Activated B cell treated with CpG ODN at 0.5 μM for 24 hours (primary cell): ENCODE measurements at regions of chr17 and their contacts with region 1.

Region 1: DNA sequence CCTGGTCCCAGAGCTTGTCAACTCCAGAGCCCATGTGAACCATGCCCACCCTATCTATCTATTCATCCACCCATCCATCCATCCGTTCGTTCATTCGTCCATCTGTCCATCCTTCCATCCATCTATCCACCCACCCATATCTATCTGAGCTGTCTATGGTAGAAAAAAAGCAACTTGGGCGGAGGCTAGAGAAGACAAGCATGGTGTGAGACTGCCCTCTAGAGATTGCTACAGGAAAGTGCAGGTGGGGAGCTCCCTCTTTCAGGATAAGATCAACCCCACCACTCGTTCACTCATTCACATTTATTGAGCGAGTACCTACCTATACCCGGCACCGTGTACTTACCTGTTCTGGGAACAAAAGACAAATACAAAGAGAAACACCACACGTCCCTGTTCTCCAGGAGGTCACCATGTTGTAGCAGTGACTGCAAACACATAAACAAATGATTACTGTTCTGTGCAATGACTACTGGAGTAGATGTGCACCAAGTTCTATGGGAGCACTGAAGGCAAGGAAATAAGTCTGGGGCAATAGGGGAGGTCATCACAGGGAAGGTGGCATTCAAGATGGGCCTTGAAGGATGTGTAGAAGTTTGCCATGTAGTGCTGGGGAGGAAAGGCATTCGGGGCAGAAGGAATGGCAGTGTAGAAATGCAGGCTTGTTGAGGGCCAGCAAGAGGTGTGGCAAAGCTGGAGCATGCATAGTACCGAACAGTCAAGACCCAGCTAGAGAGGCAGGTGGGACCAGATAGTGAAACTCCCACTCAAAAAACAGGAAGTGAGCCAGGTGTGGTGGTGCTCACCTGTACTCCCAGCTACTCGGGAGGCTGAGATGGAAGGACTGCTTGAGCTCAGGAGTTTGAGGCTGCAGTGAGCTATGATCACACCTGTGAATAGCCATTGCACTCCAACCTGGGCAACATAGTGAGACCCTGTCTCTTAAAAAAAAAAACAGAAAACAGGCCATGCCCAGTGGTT is 13.4 kb upstream of the ATP5MC1 start:
- DNase-seq: no peak
- ATAC-seq: peak; percentile 96
- H3K4me3 Mint-ChIP-seq: no peak overlapping the region
- H3K27ac Mint-ChIP-seq: no peak overlapping the region
- H3K4me1 Mint-ChIP-seq: peaks cover 2% of the 10 kb centered on the region
- H3K27me3 Mint-ChIP-seq: no peaks in the 10 kb centered on the region
- CTCF ChIP-seq: peak; percentile 82

Region 2: DNA sequence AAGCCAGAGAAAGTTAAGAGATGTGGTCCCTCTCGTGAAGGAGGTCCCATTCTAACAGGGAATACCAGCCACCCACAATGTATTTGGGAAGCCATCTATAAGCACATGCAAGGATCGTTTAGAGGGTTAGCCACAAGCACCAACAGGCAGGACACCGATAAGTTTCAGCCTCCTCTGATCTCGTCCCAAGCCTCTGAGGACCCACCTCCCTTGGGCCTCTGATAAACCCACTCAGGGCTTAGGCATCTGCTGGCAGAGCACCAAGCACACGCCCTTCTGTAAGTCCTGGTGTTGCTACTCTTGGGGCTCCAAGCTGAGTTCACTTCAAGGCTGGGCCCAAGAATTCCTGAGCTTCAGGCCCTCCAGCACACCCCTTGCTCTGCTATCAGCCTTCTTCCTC is 943.2 kb before region 1 on chr17:
- CTCF ChIA-PET with region 1: no interaction called
- POLR2A ChIA-PET with region 1: no interaction called
- intact Hi-C with region 1: no loop called
- DNase-seq: no peak
- ATAC-seq: no peak
- H3K4me3 Mint-ChIP-seq: no peak overlapping the region
- H3K27ac Mint-ChIP-seq: no peak overlapping the region
- H3K4me1 Mint-ChIP-seq: peaks cover 14% of the 10 kb centered on the region
- H3K27me3 Mint-ChIP-seq: no peaks in the 10 kb centered on the region
- CTCF ChIP-seq: no peak

Region 3: DNA sequence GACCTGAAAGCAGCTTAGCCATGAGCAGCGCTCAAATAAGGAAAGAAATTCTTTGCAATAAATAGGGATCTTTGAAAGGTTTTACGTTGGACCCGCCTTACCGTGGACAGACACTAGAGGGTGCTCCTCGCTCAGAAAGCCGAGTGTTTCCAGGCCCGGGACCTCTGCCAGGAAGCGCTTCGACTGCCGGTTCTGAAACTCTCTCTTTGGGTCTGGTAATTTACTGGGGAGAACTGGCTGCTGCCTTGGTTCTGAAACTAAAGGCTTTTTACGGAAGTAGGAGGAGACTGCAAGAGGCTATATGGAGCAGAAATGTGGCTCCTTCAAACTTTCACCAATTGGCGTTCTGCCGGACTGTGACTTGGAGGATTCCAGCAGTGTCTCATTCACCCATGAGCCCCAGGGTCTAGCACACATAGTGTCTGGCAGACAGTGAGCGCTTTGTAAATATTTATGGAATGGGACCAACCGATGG is 207.5 kb before region 1 on chr17:
- CTCF ChIA-PET with region 1: interaction called, 101 read pairs
- POLR2A ChIA-PET with region 1: no interaction called
- intact Hi-C with region 1: loop called (anchors 1 kb)
- DNase-seq: peak; percentile 48
- ATAC-seq: peak; percentile 71
- H3K4me3 Mint-ChIP-seq: peak overlapping the region; percentile 35
- H3K27ac Mint-ChIP-seq: no peak overlapping the region
- H3K4me1 Mint-ChIP-seq: peaks cover 5% of the 10 kb centered on the region
- H3K27me3 Mint-ChIP-seq: peaks cover 39% of the 10 kb centered on the region
- CTCF ChIP-seq: peak; percentile 34

Region 4: GRCh38 chr17:48724251-48725003 is 154.8 kb before region 1 on chr17:
- CTCF ChIA-PET with region 1: interaction called, 16 read pairs
- POLR2A ChIA-PET with region 1: no interaction called
- intact Hi-C with region 1: loop called (anchors 1 kb)
- DNase-seq: peak; percentile 57
- ATAC-seq: peak; percentile 75
- H3K4me3 Mint-ChIP-seq: peak overlapping the region; percentile 67
- H3K27ac Mint-ChIP-seq: peak overlapping the region; percentile 63
- H3K4me1 Mint-ChIP-seq: peaks cover 37% of the 10 kb centered on the region
- H3K27me3 Mint-ChIP-seq: peaks cover 80% of the 10 kb centered on the region
- CTCF ChIP-seq: no peak

Region 5: GRCh38 chr17:48804925-48805411 is 74.2 kb before region 1 on chr17:
- CTCF ChIA-PET with region 1: interaction called, 379 read pairs
- POLR2A ChIA-PET with region 1: interaction called, 3 read pairs
- intact Hi-C with region 1: loop called (anchors 1 kb)
- DNase-seq: peak; percentile 57
- ATAC-seq: peak; percentile 96
- H3K4me3 Mint-ChIP-seq: no peak overlapping the region
- H3K27ac Mint-ChIP-seq: no peak overlapping the region
- H3K4me1 Mint-ChIP-seq: peaks cover 4% of the 10 kb centered on the region
- H3K27me3 Mint-ChIP-seq: peaks cover 23% of the 10 kb centered on the region
- CTCF ChIP-seq: peak; percentile 26

Region 6: DNA sequence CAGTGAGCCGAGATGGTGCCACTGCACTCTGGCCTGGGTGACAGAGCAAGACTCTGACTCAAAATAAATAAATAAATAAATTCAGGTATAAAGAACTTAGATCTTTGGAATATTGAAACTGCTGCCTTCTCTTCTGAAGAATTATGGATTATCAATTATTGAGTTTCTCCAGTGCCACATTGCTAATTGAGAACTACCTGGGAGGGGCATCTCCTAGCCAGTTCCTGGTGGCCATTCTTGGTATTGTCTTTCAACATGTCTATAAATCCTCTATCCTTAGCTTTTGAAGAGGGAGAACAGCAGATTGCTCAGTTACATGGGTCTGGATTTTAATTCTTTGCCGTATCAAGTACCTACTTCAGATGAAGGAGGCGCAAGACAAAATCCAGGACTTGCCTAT is 19.2 kb before region 1 on chr17:
- CTCF ChIA-PET with region 1: interaction called, 13 read pairs
- POLR2A ChIA-PET with region 1: no interaction called
- intact Hi-C with region 1: no loop called
- DNase-seq: no peak
- ATAC-seq: no peak
- H3K4me3 Mint-ChIP-seq: no peak overlapping the region
- H3K27ac Mint-ChIP-seq: no peak overlapping the region
- H3K4me1 Mint-ChIP-seq: no peaks in the 10 kb centered on the region
- H3K27me3 Mint-ChIP-seq: no peaks in the 10 kb centered on the region
- CTCF ChIP-seq: no peak

Region 7: DNA sequence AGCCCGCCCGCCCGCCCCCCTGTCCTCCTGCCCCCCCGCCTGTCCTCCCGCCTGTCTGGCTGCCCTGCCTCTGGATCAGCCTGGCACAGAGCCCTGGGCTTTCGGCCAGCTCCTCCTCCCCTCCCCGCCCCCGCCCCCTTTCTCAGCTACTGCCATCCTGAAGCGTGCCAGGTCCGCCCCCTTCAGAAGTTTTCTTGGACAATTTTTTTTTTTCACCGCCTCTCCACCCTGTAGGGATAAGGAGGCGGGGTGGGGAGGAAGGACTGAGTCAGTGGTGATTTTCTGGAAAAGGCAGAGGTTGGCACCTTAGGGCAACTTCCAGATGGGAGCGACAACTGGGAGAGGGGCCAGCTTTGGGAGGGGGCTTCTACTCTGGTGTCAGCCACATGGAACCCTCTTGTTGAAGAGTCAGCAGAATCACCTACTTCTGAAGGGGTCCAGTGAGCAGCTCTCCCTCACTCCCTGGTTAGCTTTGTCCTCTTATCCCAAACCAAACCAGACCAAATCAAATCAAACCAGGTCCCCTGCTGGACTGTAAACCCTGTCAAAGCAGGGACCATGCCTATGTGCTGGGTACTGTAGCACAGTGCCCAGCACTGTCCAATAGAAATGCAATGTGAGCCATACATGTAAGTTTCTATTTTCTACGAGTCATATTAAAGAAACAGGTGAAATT is 137.7 kb after region 1 on chr17:
- CTCF ChIA-PET with region 1: no interaction called
- POLR2A ChIA-PET with region 1: no interaction called
- intact Hi-C with region 1: no loop called
- DNase-seq: no peak
- ATAC-seq: no peak
- H3K4me3 Mint-ChIP-seq: no peak overlapping the region
- H3K27ac Mint-ChIP-seq: no peak overlapping the region
- H3K4me1 Mint-ChIP-seq: no peaks in the 10 kb centered on the region
- H3K27me3 Mint-ChIP-seq: peaks cover 39% of the 10 kb centered on the region
- CTCF ChIP-seq: no peak

Region 8: GRCh38 chr17:49031965-49032928 is 153.0 kb after region 1 on chr17:
- CTCF ChIA-PET with region 1: interaction called, 12 read pairs
- POLR2A ChIA-PET with region 1: interaction called, 3 read pairs
- intact Hi-C with region 1: loop called (anchors 1 kb)
- DNase-seq: no peak
- ATAC-seq: peak; percentile 80
- H3K4me3 Mint-ChIP-seq: no peak overlapping the region
- H3K27ac Mint-ChIP-seq: no peak overlapping the region
- H3K4me1 Mint-ChIP-seq: peaks cover 6% of the 10 kb centered on the region
- H3K27me3 Mint-ChIP-seq: peaks cover 6% of the 10 kb centered on the region
- CTCF ChIP-seq: no peak